ENCODE measurements at regions of chr11 and their contacts with region 1.

Region 1: DNA sequence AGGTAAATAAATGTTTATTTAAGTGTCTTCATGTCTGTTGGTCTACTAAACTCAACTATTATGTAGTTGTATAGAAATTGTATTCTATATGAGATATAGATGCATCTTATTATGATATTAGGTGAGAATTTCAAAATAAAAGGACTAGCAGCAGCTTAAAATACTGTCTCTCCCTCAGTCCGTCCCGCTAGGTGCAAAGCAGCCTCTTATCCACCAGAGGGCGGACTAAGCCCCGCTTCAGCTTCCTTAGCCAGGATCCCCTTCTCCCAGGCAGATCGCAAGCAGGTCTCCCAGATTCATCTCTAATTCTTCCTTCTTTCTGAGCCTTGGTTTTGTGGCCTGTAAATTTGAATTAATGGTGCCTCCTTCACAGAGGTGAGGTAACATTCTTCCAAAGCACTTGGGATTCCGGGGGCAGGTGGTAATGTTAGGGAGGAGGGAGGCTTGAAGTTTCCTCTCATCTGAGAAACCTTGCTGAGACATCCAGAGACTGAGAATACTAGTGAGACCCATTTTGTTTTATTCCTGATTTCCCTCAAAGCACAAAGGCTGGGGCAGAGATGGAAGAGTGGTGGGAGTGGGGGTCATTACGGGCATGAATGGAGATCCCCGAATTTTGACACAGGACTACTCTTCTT is 13.5 kb upstream of the INSC start:
- DNase-seq: peak; percentile 46
- CTCF ChIP-seq: peak; percentile 85

Region 2: DNA sequence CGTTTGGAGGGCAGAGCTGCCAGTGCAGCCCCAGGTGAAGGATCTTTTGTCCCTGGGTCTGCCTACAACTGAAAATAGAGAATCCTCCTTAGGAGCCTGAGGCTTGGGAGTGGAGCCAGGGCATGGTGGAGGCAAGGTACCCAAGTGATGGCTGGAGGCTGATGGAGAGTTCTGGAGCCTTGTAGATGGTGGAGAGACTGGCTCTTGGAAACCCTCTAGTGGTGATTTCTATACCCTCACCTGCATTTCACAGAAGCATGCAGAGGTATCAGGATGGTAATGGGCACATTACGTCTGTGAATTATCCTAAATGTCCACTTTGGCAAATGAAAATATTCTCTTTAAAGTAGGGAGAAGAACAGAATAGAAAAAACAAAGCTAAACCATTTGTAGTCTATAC is 57.9 kb after region 1 on chr11:
- in situ Hi-C with region 1: loop called (anchors 10 kb)
- DNase-seq: peak; percentile 28
- CTCF ChIP-seq: no peak